CD4-positive, alpha-beta T cell (primary cell): ENCODE measurements at regions of chr14 and their contacts with region 1.

Region 1: DNA sequence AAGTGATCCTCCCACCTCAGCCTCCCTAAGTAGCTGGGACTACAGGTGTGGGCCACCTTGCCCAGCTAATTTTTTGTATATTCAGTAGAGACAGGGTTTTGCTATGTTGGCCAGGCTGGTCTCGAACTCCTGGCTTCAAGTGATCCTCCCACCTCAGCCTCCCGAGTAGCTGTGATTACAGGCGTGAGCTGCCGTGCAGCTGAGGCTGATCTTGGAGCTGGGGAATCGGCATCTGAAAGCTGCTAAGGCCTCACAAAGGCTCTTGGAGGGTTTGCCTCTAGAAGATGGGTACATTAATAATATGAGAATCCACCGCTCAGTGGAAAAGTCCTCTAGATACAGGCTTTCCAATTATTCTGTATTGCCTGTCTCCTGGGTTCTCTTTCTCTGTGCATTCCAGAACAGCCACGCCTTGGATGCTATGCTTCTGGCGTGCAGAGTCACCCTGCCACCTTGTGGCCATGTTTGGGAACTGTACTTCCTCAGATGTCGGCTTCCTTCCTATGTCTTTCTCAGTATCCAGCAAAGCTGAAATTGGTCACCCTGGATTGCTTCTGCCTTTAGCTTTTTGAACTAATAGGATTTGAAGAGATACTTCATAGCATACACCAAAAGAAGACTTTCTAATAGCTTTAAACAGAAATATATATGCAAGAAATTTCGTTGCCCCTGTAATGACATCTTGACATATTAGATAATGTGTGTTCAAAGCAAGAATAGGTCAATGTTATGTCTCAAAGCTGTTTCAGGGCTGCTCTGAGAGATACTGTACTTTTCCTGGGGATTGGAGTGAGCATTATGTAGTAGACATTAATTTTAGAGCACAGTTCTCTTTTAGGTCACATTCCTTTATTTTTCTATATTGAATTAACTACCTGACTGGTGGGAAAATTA is 75.4 kb downstream of the SNAPC1 start:
- DNase-seq: peak; percentile 54 to 88 (median 68)
- ATAC-seq: peak; percentile 99
- H3K4me3 ChIP-seq: no peak overlapping the region
- H3K4me3 Mint-ChIP-seq: no peak overlapping the region
- H3K27ac ChIP-seq: no peak overlapping the region
- H3K27ac Mint-ChIP-seq: no peak overlapping the region
- H3K4me1 ChIP-seq: no peaks in the 10 kb centered on the region
- H3K4me1 Mint-ChIP-seq: no peaks in the 10 kb centered on the region
- H3K27me3 ChIP-seq: no peaks in the 10 kb centered on the region
- H3K27me3 Mint-ChIP-seq: peaks cover 6% of the 10 kb centered on the region
- CTCF ChIP-seq: peak; percentile 96

Region 2: GRCh38 chr14:61296719-61297502 is 540.7 kb before region 1 on chr14:
- CTCF ChIA-PET with region 1: interaction called, 9 read pairs
- POLR2A ChIA-PET with region 1: no interaction called
- intact Hi-C with region 1: loop called in 1 of 2 experiments (anchors 5 kb)
- DNase-seq: peak in 4 of 14 experiments; percentile 23 to 80 (median 75)
- ATAC-seq: peak; percentile 76
- H3K4me3 ChIP-seq: no peak overlapping the region
- H3K4me3 Mint-ChIP-seq: no peak overlapping the region
- H3K27ac ChIP-seq: no peak overlapping the region
- H3K27ac Mint-ChIP-seq: no peak overlapping the region
- H3K4me1 ChIP-seq: peaks cover 18% of the 10 kb centered on the region
- H3K4me1 Mint-ChIP-seq: peaks cover 56% of the 10 kb centered on the region
- H3K27me3 ChIP-seq: no peaks in the 10 kb centered on the region
- H3K27me3 Mint-ChIP-seq: no peaks in the 10 kb centered on the region
- CTCF ChIP-seq: peak; percentile 77

Region 3: DNA sequence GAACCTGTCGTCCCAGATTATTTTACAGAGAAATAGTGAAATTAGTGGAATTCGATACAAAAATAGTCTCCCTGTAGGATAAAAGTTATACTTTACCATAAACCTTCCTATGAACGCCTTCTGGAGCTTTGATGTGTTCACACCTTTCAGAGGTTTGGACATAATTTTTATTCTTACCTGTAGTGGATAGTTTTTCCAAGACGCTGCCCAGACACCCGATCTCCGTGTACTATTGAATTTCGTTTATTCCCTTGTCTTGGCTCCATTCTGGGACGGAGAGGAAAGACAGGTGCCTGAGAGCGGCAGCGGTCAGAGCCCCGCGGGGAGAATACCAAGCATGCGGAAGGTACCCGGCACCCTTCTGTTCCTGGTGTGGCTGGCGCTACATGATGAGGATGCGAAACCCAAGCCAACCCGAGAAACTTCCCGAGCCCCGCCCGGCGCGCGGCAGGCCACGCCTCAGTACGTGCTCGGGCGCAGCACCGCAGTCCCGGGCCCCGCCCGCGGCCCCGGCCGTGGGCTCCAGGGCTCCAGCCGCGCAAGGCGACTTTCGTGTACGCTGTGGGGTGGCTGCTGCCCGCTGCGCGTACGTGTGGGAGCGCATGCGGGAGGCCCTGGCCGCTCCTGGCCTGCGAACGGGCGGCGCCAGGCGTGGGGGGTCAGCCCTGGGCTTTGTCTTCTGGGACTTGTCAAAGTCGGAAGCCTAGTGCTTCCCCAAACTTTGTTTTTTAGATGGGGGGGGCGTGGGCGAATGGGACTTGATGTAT is 86.7 kb before region 1 on chr14:
- CTCF ChIA-PET with region 1: interaction called, 3 read pairs
- POLR2A ChIA-PET with region 1: interaction called, 3 read pairs
- intact Hi-C with region 1: loop called in 1 of 2 experiments (anchors 5 kb)
- DNase-seq: peak; percentile 40 to 91 (median 68)
- ATAC-seq: peak; percentile 94
- H3K4me3 ChIP-seq: peak overlapping the region; percentile 56
- H3K4me3 Mint-ChIP-seq: peak overlapping the region; percentile 83
- H3K27ac ChIP-seq: peak overlapping the region in 1 of 2 donors; percentile 32
- H3K27ac Mint-ChIP-seq: peak overlapping the region; percentile 58
- H3K4me1 ChIP-seq: peaks cover 7% of the 10 kb centered on the region
- H3K4me1 Mint-ChIP-seq: peaks cover 4% of the 10 kb centered on the region
- H3K27me3 ChIP-seq: no peaks in the 10 kb centered on the region
- H3K27me3 Mint-ChIP-seq: no peaks in the 10 kb centered on the region
- CTCF ChIP-seq: no peak